ENCODE measurements at regions of chr16 and their contacts with region 1.

Region 1: GRCh38 chr16:75471723-75472633 is 7.5 kb upstream of the TMEM170A start:
- H3K4me3 ChIP-seq: no peak overlapping the region
- H3K27ac ChIP-seq: no peak overlapping the region
- H3K4me1 ChIP-seq: no peaks in the 10 kb centered on the region
- CTCF ChIP-seq: peak; percentile 72

Region 2: GRCh38 chr16:75342308-75342829 is 129.6 kb before region 1 on chr16:
- CTCF ChIA-PET with region 1: no interaction called
- POLR2A ChIA-PET with region 1: no interaction called
- H3K4me3 ChIP-seq: no peak overlapping the region
- H3K27ac ChIP-seq: no peak overlapping the region
- H3K4me1 ChIP-seq: peaks cover 8% of the 10 kb centered on the region
- CTCF ChIP-seq: no peak

Region 3: DNA sequence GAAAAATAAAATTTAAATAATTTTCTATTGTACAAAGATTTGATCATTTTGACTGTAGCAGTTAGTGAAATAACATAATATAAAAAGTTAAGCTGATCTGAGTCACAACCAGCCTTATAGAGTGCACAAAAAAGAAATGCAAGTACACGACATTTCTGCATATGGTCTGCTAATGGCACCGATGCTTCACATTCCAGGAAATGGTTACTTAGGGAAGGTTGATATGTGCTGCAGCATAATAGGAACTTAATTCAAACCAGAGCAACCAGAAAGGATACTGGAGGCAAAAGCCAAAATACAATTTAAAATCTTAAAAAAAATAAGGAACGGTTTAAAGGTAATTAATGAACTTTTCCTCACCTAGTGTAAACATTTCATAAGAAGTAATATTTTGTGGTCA is 28.7 kb before region 1 on chr16:
- CTCF ChIA-PET with region 1: no interaction called
- POLR2A ChIA-PET with region 1: no interaction called
- H3K4me3 ChIP-seq: no peak overlapping the region
- H3K27ac ChIP-seq: no peak overlapping the region
- H3K4me1 ChIP-seq: peaks cover 10% of the 10 kb centered on the region
- CTCF ChIP-seq: no peak

Region 4: DNA sequence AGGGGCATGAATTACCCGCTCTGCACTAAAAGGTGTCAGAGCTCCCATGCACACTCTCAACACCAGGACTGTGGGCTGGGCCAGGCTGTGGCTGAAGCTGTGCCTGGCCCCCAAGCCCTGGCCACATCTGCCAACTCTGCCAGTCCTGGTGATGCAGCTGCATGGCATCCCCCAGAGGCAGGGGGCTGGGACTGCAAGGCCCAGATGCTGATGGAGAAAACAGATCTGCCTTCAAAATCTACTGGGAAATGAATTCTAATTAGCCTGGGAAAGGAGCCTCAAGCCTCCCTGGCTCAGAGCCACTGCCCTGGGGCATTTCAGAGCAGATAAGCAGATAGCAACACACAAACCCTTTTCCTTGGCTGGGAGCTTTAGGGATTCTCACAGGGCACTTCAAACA is 19.9 kb after region 1 on chr16:
- CTCF ChIA-PET with region 1: interaction called, 30 read pairs
- POLR2A ChIA-PET with region 1: interaction called, 3 read pairs
- H3K4me3 ChIP-seq: no peak overlapping the region
- H3K27ac ChIP-seq: no peak overlapping the region; the same call in 1 of the 2 replicates
- H3K4me1 ChIP-seq: peaks cover 7% of the 10 kb centered on the region
- CTCF ChIP-seq: peak; percentile 61; the same call in 1 of the 2 replicates

Region 5: GRCh38 chr16:75497558-75497957 is 25.6 kb after region 1 on chr16:
- CTCF ChIA-PET with region 1: interaction called, 30 read pairs
- POLR2A ChIA-PET with region 1: interaction called, 3 read pairs
- H3K4me3 ChIP-seq: no peak overlapping the region
- H3K27ac ChIP-seq: no peak overlapping the region
- H3K4me1 ChIP-seq: peaks cover 13% of the 10 kb centered on the region
- CTCF ChIP-seq: no peak

Region 6: DNA sequence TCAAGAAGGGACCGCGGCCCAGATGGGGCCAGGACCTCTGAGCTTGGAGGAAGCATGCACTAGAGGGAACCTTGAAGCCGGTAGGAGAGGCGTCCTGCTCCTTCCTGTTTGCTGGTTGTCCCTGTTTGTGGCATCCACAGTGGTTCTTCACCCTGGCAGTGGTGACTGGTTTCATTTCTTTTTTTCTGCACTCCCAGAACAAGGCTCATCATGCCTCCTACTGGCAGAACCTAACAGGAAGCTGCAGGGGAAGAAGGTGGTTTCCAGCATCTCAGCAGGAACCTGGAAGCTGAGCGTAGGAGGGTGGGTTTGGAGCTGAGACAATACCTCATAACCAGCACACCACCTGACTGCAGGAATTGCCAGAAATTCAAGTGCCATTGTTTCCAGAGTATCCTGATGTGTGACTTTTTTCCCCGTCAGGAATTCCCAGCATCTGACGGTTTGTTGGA is 78.3 kb after region 1 on chr16:
- CTCF ChIA-PET with region 1: interaction called, 49 read pairs
- POLR2A ChIA-PET with region 1: no interaction called
- H3K4me3 ChIP-seq: no peak overlapping the region
- H3K27ac ChIP-seq: no peak overlapping the region
- H3K4me1 ChIP-seq: no peaks in the 10 kb centered on the region
- CTCF ChIP-seq: peak; percentile 26; the same call in 1 of the 2 replicates

Measured in HEK293 (cell line).